Right ventricle myocardium superior (tissue), 1 donor: ENCODE measurements at regions of chr6 and their contacts with region 1.

Region 1: GRCh38 chr6:167968091-167968490 is 29.4 kb upstream of the KIF25 start:
- DNase-seq: no peak
- ATAC-seq: no peak

Region 2: DNA sequence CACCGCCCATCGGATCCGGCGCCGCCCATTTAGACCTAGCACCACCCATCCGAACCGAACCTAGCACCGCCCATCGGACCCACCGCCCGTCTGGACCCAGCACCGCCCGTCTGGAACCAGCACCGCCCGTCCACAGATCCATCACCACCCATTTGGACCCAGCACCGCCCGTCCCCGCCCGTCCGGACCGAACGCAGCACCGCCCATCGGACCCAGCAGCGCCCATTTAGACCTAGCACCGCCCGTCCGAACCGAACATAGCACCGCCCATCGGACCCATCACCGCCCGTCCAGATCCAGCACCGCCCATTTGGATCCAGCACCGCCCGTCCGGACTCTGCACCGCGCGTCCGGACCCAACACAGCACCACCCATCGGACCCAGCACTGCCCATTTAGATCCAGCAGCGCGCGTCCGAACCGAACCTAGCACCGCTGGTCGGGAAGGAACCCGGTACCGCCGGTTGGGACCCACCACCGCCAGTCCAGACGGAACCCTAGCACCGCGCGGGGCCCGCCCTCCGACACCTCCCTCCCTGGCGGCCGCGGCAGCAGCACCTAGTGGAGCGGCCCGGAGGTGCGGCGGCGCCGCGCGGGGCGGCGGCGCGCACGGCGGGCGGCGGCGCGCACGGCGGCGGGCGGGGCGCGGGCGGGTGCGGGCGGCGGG is 141.7 kb before region 1 on chr6:
- intact Hi-C with region 1: no loop called
- DNase-seq: peak; percentile 87
- ATAC-seq: peak; percentile 93

Region 3: DNA sequence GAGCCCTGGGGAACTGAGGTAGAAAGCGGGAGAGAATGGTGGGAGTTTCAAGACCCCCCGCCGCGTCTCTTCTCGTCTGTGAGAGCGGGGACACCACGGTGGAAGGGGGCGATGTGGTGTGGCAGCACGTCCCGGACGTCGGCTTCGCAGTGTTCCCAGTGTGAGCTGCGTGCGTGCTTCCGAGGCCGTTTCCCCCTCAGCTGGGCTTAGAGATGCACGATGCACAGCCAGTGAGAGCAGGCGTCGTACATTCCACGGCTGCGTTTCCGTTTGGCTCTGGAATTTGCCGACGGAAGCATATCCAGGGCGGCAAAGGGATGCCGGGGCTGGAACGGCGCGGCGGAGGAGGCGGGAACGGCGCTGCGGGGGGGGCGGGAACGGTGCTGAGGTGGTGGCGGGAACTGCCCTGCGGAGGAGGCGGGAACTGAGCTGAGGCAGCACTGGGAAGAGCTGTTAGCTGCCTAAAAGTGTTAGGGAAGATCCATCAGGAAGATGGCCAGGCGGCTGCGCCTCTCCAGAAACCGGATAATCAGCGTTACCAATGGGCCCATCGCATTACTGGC is 67.1 kb after region 1 on chr6:
- intact Hi-C with region 1: loop called (anchors 10 kb)
- DNase-seq: peak; percentile 82
- ATAC-seq: peak; percentile 66